ENCODE measurements at regions of chr2 and their contacts with region 1.

Region 1: GRCh38 chr2:218979846-218980734 is 4.9 kb downstream of the FEV start:
- DNase-seq: peak; percentile 93
- ATAC-seq: peak; percentile 90
- H3K4me3 Mint-ChIP-seq: peak overlapping the region; percentile 58
- H3K27ac Mint-ChIP-seq: no peak overlapping the region
- H3K4me1 Mint-ChIP-seq: peaks cover 21% of the 10 kb centered on the region
- H3K27me3 Mint-ChIP-seq: peaks cover 63% of the 10 kb centered on the region
- CTCF ChIP-seq: peak; percentile 98

Region 2: DNA sequence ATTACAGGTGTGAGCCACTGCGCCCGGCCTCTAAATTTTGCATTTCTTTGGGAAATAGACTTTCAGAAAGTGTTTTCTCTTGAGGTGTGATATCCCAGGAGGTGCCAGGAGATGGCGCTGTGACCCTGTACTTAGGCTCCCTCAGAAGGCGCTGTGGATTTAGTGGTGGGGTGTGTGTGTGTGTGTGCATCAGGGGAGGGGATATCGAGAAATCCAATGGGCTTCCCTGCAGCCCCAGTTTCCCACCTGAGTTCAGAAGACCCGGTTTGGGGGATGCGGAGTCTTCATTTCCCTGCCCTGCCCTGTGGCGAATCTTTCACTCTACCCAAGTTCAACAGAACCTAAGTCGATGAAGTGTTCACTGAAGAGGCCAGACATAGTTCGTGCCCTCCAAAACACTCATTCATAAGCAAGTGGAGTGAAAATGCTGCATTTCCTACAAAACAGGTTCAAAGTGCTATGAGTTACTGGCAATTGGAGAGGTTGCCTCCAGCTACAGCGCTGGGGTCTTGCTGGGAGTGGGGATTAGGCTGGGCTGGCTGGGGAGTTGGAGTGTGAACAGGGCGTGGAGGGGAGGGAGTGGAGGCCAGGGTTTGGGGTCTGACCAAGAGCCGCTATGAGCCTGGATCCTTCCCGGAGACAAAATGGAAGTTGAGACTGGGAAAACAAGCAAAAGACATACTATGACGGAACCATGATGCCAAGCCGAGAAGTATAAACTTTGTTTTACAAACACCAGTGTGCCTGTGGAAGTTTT is 127.0 kb before region 1 on chr2:
- CTCF ChIA-PET with region 1: interaction called, 20 read pairs
- POLR2A ChIA-PET with region 1: no interaction called
- intact Hi-C with region 1: loop called (anchors 5 kb)
- DNase-seq: peak; percentile 85
- ATAC-seq: peak; percentile 85
- H3K4me3 Mint-ChIP-seq: no peak overlapping the region
- H3K27ac Mint-ChIP-seq: no peak overlapping the region
- H3K4me1 Mint-ChIP-seq: no peaks in the 10 kb centered on the region
- H3K27me3 Mint-ChIP-seq: peaks cover 61% of the 10 kb centered on the region
- CTCF ChIP-seq: peak; percentile 89

Region 3: GRCh38 chr2:218898109-218898878 is 81.8 kb before region 1 on chr2:
- CTCF ChIA-PET with region 1: interaction called, 14 read pairs
- POLR2A ChIA-PET with region 1: interaction called, 3 read pairs
- intact Hi-C with region 1: no loop called
- DNase-seq: peak; percentile 90
- ATAC-seq: peak; percentile 26
- H3K4me3 Mint-ChIP-seq: peak overlapping the region; percentile 56
- H3K27ac Mint-ChIP-seq: peak overlapping the region; percentile 73
- H3K4me1 Mint-ChIP-seq: peaks cover 43% of the 10 kb centered on the region
- H3K27me3 Mint-ChIP-seq: peaks cover 33% of the 10 kb centered on the region
- CTCF ChIP-seq: peak; percentile 99

Region 4: GRCh38 chr2:218995972-218996711 is 16.1 kb after region 1 on chr2:
- CTCF ChIA-PET with region 1: interaction called, 128 read pairs
- POLR2A ChIA-PET with region 1: interaction called, 6 read pairs
- intact Hi-C with region 1: no loop called
- DNase-seq: peak; percentile 90
- ATAC-seq: peak; percentile 91
- H3K4me3 Mint-ChIP-seq: no peak overlapping the region
- H3K27ac Mint-ChIP-seq: no peak overlapping the region
- H3K4me1 Mint-ChIP-seq: peaks cover 4% of the 10 kb centered on the region
- H3K27me3 Mint-ChIP-seq: peaks cover 75% of the 10 kb centered on the region
- CTCF ChIP-seq: peak; percentile 93

Region 5: GRCh38 chr2:219029829-219030165 is 49.7 kb after region 1 on chr2:
- CTCF ChIA-PET with region 1: interaction called, 19 read pairs
- POLR2A ChIA-PET with region 1: no interaction called
- intact Hi-C with region 1: no loop called
- DNase-seq: peak; percentile 86
- ATAC-seq: peak; percentile 95
- H3K4me3 Mint-ChIP-seq: no peak overlapping the region
- H3K27ac Mint-ChIP-seq: no peak overlapping the region
- H3K4me1 Mint-ChIP-seq: no peaks in the 10 kb centered on the region
- H3K27me3 Mint-ChIP-seq: peaks cover 14% of the 10 kb centered on the region
- CTCF ChIP-seq: peak; percentile 92

Region 6: GRCh38 chr2:219119422-219120043 is 139.4 kb after region 1 on chr2:
- CTCF ChIA-PET with region 1: interaction called, 10 read pairs
- POLR2A ChIA-PET with region 1: no interaction called
- intact Hi-C with region 1: no loop called
- DNase-seq: peak; percentile 80
- ATAC-seq: peak; percentile 78
- H3K4me3 Mint-ChIP-seq: no peak overlapping the region
- H3K27ac Mint-ChIP-seq: no peak overlapping the region
- H3K4me1 Mint-ChIP-seq: peaks cover 11% of the 10 kb centered on the region
- H3K27me3 Mint-ChIP-seq: no peaks in the 10 kb centered on the region
- CTCF ChIP-seq: peak; percentile 73